Activated CD4-positive, alpha-beta memory T cell treated with anti-CD3 and anti-CD28 coated beads, Interleukin-2, amount 10 ng/mL, durations not matched to agents 7 days and 5 days (primary cell): ENCODE measurements at regions of chr11 and their contacts with region 1.

Region 1: GRCh38 chr11:43944761-43945311 is 2.4 kb downstream of the C11orf96 start:
- DNase-seq: peak; percentile 73
- H3K4me3 Mint-ChIP-seq: peak overlapping the region; percentile 35
- H3K27ac Mint-ChIP-seq: no peak overlapping the region
- H3K4me1 Mint-ChIP-seq: peaks cover 21% of the 10 kb centered on the region
- H3K27me3 Mint-ChIP-seq: peaks cover 61% of the 10 kb centered on the region

Region 2: GRCh38 chr11:43880640-43881159 is 64.1 kb before region 1 on chr11 and contains the start of gene ALKBH3:
- CTCF ChIA-PET with region 1: interaction called, 18 read pairs
- POLR2A ChIA-PET with region 1: no interaction called
- DNase-seq: peak; percentile 91
- H3K4me3 Mint-ChIP-seq: peak within 1 kb of the TSS; percentile 92
- H3K27ac Mint-ChIP-seq: peak within 1 kb of the TSS; percentile 72
- H3K4me1 Mint-ChIP-seq: peaks cover 23% of the 10 kb centered on the region
- H3K27me3 Mint-ChIP-seq: peaks cover 20% of the 10 kb centered on the region
- total RNA-seq, gene ALKBH3: 25.4 to 32.0 TPM

Region 3: GRCh38 chr11:43895601-43896000 is 49.2 kb before region 1 on chr11:
- CTCF ChIA-PET with region 1: interaction called, 56 read pairs
- POLR2A ChIA-PET with region 1: no interaction called
- DNase-seq: no peak
- H3K4me3 Mint-ChIP-seq: no peak overlapping the region
- H3K27ac Mint-ChIP-seq: no peak overlapping the region
- H3K4me1 Mint-ChIP-seq: no peaks in the 10 kb centered on the region
- H3K27me3 Mint-ChIP-seq: no peaks in the 10 kb centered on the region

Region 4: GRCh38 chr11:43987384-43988039 is 42.7 kb after region 1 on chr11:
- CTCF ChIA-PET with region 1: no interaction called
- POLR2A ChIA-PET with region 1: no interaction called
- DNase-seq: no peak
- H3K4me3 Mint-ChIP-seq: no peak overlapping the region
- H3K27ac Mint-ChIP-seq: no peak overlapping the region
- H3K4me1 Mint-ChIP-seq: no peaks in the 10 kb centered on the region
- H3K27me3 Mint-ChIP-seq: peaks cover 7% of the 10 kb centered on the region